CD8-positive, alpha-beta memory T cell (primary cell): ENCODE measurements at regions of chr5 and their contacts with region 1.

Region 1: GRCh38 chr5:142699184-142699720 is 13.4 kb upstream of the FGF1 start:
- DNase-seq: peak; percentile 50 to 78 (median 61)
- H3K4me3 ChIP-seq: no peak overlapping the region
- H3K4me3 Mint-ChIP-seq: no peak overlapping the region
- H3K27ac ChIP-seq: no peak overlapping the region
- H3K27ac Mint-ChIP-seq: no peak overlapping the region
- H3K4me1 ChIP-seq: no peaks in the 10 kb centered on the region
- H3K4me1 Mint-ChIP-seq: no peaks in the 10 kb centered on the region
- H3K27me3 ChIP-seq: no peaks in the 10 kb centered on the region
- H3K27me3 Mint-ChIP-seq: peaks cover 3 to 12% of the 10 kb centered on the region in 2 donors

Region 2: DNA sequence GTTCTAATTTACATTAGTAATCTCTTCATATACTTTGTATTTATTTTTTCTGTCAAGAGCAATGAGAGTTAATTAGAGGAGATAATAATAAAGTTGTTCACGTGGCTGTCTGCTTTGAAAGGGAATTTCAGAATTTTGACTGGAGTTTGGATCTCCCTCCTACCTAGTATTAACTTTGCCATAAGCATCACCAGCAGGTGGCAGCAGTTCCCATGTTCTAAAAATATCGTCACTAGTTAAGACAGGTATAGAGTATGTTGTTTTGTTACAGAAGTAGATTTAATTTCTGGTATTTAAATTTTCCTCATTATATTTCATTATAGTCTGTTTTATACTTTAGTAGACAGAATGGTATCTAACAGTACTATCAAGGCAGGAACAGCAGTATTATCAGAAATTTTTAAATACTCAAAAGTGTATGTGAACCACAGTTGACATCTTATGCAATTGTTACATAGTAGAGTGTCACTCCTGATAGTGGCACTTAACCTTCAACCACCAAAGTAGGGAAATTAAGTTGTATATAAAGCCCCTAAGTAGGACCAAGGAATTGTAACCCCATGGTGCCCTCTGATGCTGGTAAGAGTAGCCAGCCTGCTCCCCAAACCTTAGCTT is 706.8 kb before region 1 on chr5:
- CTCF ChIA-PET with region 1: interaction called, 11 read pairs
- POLR2A ChIA-PET with region 1: no interaction called
- DNase-seq: peak; percentile 53 to 80 (median 68)
- H3K4me3 ChIP-seq: no peak overlapping the region
- H3K4me3 Mint-ChIP-seq: no peak overlapping the region
- H3K27ac ChIP-seq: no peak overlapping the region
- H3K27ac Mint-ChIP-seq: peak overlapping the region in 2 of 8 donors; percentile 0 to 11
- H3K4me1 ChIP-seq: peaks cover 9% of the 10 kb centered on the region
- H3K4me1 Mint-ChIP-seq: peaks cover 3 to 14% (median 5%) of the 10 kb centered on the region in 3 donors
- H3K27me3 ChIP-seq: no peaks in the 10 kb centered on the region
- H3K27me3 Mint-ChIP-seq: peaks cover 0 to 1% of the 10 kb centered on the region in 2 donors

Region 3: DNA sequence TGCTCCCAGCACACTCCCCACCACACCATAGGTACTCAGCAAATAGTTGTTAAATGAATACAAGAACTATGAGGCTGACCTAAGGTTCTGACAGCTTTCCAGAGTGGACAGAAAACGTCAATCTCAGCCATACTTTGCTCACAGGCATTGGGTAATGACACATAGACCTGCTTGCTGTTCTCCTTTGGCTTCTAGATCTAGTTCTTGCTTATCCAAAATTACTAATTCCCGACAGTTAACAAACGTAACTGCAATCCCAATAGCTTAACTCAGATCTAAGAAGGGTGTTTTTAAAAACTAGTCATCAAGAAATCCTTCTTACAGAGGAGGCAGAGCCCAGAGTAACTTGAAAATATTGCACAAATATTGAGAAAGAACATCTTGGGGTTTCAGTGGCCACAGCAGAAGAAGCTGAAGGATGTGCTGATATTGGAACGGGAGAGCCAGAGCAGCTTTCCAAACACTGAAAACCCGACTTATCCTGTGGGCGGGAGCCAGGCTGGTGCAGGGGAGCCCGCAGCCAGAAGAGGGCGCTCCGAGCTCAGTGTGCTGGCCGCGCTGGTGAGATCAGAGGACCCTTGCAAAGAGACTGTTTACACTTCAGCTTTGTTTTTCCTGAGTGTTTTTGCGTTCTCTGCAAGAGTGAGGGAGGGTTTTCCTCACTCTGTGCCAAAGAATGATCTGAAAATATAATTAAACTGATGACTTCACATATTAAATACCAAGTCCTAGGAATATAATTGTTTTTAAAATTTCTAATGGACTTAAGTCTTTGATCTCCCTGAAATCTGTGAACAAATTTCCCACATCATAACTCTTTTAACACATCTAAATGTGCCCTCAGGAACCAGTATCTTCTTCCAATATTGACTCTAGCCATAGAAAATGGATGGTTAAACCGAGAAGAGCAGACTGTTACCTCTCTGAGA is 43.6 kb before region 1 on chr5:
- CTCF ChIA-PET with region 1: interaction called, 31 read pairs
- POLR2A ChIA-PET with region 1: no interaction called
- DNase-seq: peak; percentile 43 to 73 (median 53)
- H3K4me3 ChIP-seq: no peak overlapping the region
- H3K4me3 Mint-ChIP-seq: no peak overlapping the region
- H3K27ac ChIP-seq: no peak overlapping the region
- H3K27ac Mint-ChIP-seq: peak overlapping the region in 1 of 8 donors; percentile 27
- H3K4me1 ChIP-seq: peaks cover 5% of the 10 kb centered on the region
- H3K4me1 Mint-ChIP-seq: peaks cover 3 to 6% (median 6%) of the 10 kb centered on the region in 3 donors
- H3K27me3 ChIP-seq: peaks cover 7% of the 10 kb centered on the region
- H3K27me3 Mint-ChIP-seq: peaks cover 6 to 38% of the 10 kb centered on the region in 2 donors

Region 4: DNA sequence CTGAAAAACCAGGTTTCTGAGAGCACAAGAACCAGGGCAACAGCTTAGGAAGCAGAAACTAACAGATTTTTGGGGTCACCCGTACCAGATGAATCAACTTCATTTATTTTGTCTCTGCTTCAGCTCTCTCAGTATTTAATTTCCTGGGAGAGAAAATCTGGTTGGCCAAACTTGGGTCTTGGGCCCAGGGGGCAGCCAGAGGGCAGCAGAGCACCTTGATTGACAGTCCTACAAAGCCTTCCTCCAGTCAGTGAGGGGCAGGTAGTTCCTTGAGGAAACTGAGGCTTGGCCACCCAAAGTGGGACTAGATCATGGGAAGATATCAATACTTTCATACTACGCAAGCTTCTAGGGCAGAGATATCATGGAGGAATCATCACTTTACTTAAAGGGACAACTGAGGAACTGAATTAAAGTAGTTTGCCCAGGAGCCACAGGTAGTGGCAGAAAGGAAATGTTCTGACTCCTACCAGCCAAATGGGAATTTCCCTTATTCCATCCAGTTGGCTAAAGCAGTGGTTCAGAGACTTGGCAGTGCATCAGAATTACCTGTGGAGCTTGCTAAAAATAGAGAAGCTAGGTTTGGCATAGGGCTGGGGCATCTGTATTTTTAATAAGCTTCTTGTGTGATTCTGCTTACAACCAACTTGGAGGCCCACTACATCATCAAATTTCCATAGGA is 49.5 kb after region 1 on chr5:
- CTCF ChIA-PET with region 1: no interaction called
- POLR2A ChIA-PET with region 1: no interaction called
- DNase-seq: peak; percentile 31 to 70 (median 39)
- H3K4me3 ChIP-seq: no peak overlapping the region
- H3K4me3 Mint-ChIP-seq: no peak overlapping the region
- H3K27ac ChIP-seq: no peak overlapping the region
- H3K27ac Mint-ChIP-seq: peak overlapping the region in 3 of 8 donors; percentile 10 to 51 (median 47)
- H3K4me1 ChIP-seq: no peaks in the 10 kb centered on the region
- H3K4me1 Mint-ChIP-seq: peaks cover 12 to 16% (median 13%) of the 10 kb centered on the region in 3 donors
- H3K27me3 ChIP-seq: no peaks in the 10 kb centered on the region
- H3K27me3 Mint-ChIP-seq: peaks cover 2 to 3% of the 10 kb centered on the region in 2 donors

Region 5: DNA sequence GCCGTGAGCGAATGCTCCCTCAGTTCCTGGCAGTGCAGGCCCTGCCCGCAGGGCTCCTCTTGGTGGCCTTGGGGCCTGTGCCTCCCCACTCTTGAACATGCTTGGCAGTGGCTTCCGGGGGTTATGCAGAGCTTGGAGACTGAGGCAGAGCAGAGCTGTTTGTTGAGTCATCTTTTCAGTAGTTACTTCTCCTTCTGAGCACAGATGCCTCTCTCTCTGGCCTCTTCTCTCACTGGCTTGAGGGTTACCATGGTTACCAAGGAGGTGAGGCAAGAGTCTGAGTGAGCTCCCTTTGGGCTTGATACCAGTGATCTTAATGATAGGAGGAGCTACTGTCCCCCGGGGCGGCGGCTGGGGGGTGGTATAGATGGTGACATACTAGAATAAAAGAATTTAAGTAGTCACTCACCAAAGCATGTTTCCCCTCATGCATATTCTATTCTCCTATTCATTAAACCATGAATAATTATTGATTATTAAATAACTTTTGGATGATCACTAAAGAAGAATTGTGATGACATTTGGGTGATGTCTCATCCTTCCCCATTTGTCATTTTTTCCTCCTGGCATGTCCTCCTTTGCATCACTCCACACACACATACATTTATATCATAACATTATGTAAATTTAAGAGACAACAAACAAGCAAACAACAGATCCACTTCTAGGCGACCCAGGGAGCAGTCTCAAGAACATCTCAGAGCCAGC is 182.0 kb after region 1 on chr5:
- CTCF ChIA-PET with region 1: interaction called, 10 read pairs
- POLR2A ChIA-PET with region 1: no interaction called
- DNase-seq: no peak
- H3K4me3 ChIP-seq: no peak overlapping the region
- H3K4me3 Mint-ChIP-seq: no peak overlapping the region
- H3K27ac ChIP-seq: no peak overlapping the region
- H3K27ac Mint-ChIP-seq: peak overlapping the region in 1 of 8 donors; percentile 70
- H3K4me1 ChIP-seq: no peaks in the 10 kb centered on the region
- H3K4me1 Mint-ChIP-seq: peaks cover 19 to 25% (median 20%) of the 10 kb centered on the region in 3 donors
- H3K27me3 ChIP-seq: no peaks in the 10 kb centered on the region
- H3K27me3 Mint-ChIP-seq: no peaks in the 10 kb centered on the region